ENCODE measurements at regions of chrX and their contacts with region 1.

Region 1: GRCh38 chrX:140572724-140573123 is 67.9 kb upstream of the SOX3 start:
- DNase-seq: peak in 4 of 10 donors; percentile 9 to 45 (median 30)
- H3K4me3 ChIP-seq: no peak overlapping the region
- H3K27ac ChIP-seq: no peak overlapping the region
- H3K27me3 ChIP-seq: peaks cover 0 to 61% (median 12%) of the 10 kb centered on the region in 45 donors
- CTCF ChIP-seq: peak in 54 of 56 donors; percentile 26 to 82 (median 62)

Region 2: GRCh38 chrX:140664939-140665338 is 92.2 kb after region 1 on chrX:
- intact Hi-C with region 1: loop called (anchors 5 kb)
- DNase-seq: no peak
- H3K4me3 ChIP-seq: no peak overlapping the region
- H3K27ac ChIP-seq: no peak overlapping the region
- H3K27me3 ChIP-seq: peaks cover 0 to 43% (median 7%) of the 10 kb centered on the region in 45 donors
- CTCF ChIP-seq: peak in 53 of 56 donors; percentile 22 to 78 (median 54)